Prostate gland (tissue), 2 donors: ENCODE measurements at regions of chr9 and their contacts with region 1.

Region 1: DNA sequence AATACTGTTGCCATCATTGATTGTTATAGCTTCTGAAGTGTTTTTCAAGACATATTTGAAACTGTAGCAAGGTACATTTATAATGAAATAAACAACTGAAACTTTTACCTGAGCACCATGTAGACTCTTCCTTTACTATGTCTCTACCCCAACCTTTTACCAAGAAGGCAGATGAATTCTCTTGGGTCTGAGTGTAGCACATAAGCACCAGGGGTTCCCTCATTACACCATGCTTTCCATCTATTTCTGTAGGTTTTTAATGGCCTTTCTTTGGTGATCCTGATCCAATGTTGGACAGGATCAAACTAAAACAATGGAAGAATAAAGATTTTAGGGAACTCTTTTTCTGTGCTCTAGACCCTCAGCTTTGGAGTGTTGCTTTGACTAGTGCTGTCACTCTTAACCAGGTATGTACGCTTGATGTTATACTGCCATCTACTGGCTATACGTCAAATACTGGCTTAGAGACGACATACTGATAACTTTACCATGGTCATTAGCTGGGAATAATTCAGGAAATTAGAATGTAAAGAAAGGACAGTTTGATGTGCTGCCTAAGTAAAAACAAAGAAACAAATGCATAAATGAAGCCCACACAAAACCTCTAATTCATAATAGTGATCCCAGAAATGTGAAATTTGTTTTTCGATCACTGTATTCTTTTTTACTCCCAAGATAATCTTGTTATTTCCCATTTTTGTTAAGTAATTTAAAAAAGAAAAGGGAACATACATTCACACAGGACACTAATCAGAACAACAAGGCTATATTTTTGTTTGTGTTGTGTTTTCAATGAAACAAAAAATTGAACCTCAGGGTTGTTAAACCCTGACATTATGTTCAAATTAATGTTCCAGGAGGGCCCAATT is 30.7 kb downstream of the IFNW1 start:
- DNase-seq: peak; percentile 25
- H3K4me3 ChIP-seq: no peak overlapping the region
- H3K27ac ChIP-seq: no peak overlapping the region
- H3K4me1 ChIP-seq: no peaks in the 10 kb centered on the region
- H3K27me3 ChIP-seq: no peaks in the 10 kb centered on the region
- CTCF ChIP-seq: peak; percentile 57 to 79 (median 74)
- POLR2A ChIP-seq: no peak

Region 2: GRCh38 chr9:20356403-20357035 is 754.4 kb before region 1 on chr9:
- intact Hi-C with region 1: loop called (anchors 10 kb)
- DNase-seq: peak; percentile 78
- H3K4me3 ChIP-seq: peak overlapping the region in 1 of 2 donors; percentile 14
- H3K27ac ChIP-seq: peak overlapping the region; percentile 38 to 59
- H3K4me1 ChIP-seq: peaks cover 4% of the 10 kb centered on the region
- H3K27me3 ChIP-seq: no peaks in the 10 kb centered on the region
- CTCF ChIP-seq: peak in 3 of 4 experiments; percentile 60 to 71 (median 64)
- POLR2A ChIP-seq: no peak

Region 3: DNA sequence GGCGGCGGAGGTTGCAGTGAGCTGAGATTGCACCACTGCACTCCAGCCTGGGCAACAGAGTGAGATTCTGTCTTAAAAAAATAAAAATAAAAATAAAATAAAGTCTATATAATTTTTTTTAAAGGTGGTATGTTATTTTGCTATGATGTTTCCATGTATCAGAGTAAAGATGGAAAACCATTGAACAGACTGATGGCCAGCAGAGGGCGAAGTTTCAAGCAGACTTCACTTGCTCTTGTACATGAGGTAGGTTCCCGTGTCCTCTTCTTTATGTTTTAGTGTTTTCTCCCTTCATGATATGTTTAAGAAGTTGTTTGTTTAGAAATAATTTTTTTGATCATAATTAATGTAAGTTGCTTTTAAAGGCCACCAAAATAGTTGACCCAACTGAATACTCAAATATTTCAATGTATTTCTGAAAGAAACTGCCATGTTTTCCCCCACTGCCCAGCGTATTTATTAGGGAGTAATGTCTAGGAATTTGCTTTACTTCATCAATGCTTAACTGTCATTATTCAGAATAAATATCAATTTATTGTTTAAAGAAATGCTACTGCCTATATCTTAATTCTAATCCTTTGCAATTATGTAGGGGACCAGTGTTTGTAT is 225.9 kb before region 1 on chr9:
- intact Hi-C with region 1: loop called (anchors 5 kb)
- DNase-seq: peak; percentile 15
- H3K4me3 ChIP-seq: no peak overlapping the region
- H3K27ac ChIP-seq: no peak overlapping the region
- H3K4me1 ChIP-seq: no peaks in the 10 kb centered on the region
- H3K27me3 ChIP-seq: no peaks in the 10 kb centered on the region
- CTCF ChIP-seq: peak in 3 of 4 experiments; percentile 32 to 44 (median 42)
- POLR2A ChIP-seq: no peak

Region 4: GRCh38 chr9:20941174-20941690 is 169.7 kb before region 1 on chr9:
- intact Hi-C with region 1: loop called (anchors 5 kb)
- DNase-seq: peak; percentile 67
- H3K4me3 ChIP-seq: no peak overlapping the region
- H3K27ac ChIP-seq: no peak overlapping the region
- H3K4me1 ChIP-seq: no peaks in the 10 kb centered on the region
- H3K27me3 ChIP-seq: no peaks in the 10 kb centered on the region
- CTCF ChIP-seq: peak; percentile 56 to 81 (median 80)
- POLR2A ChIP-seq: no peak

Region 5: GRCh38 chr9:21154018-21154608 is 43.2 kb after region 1 on chr9:
- intact Hi-C with region 1: no loop called
- DNase-seq: no peak
- H3K4me3 ChIP-seq: no peak overlapping the region
- H3K27ac ChIP-seq: no peak overlapping the region
- H3K4me1 ChIP-seq: no peaks in the 10 kb centered on the region
- H3K27me3 ChIP-seq: no peaks in the 10 kb centered on the region
- CTCF ChIP-seq: no peak
- POLR2A ChIP-seq: no peak